Activated T-helper 1 cell treated with anti-CD3 and anti-CD28 coated beads, Interleukin-12 subunit alpha, Interleukin-12 subunit beta, Interleukin-2, Interleukin-4 antibody, amounts not matched to agents 30 ng/mL and 10 ng/mL and 1 ng/mL, durations not matched to agents 14 hours and 24 hours and 36 hours (primary cell): ENCODE measurements at regions of chr3 and their contacts with region 1.

Region 1: GRCh38 chr3:11643605-11644087 is at the start of gene VGLL4:
- DNase-seq: peak; percentile 59
- H3K4me3 Mint-ChIP-seq: peak within 1 kb of the TSS; percentile 95
- H3K27ac Mint-ChIP-seq: peak within 1 kb of the TSS; percentile 96
- H3K4me1 Mint-ChIP-seq: peaks cover 38% of the 10 kb centered on the region
- H3K27me3 Mint-ChIP-seq: peaks cover 17% of the 10 kb centered on the region
- total RNA-seq, gene VGLL4: 46.0 and 48.7 TPM in 2 replicates

Region 2: GRCh38 chr3:11271986-11272904 is 371.4 kb before region 1 on chr3 and contains the start of gene ATG7:
- intact Hi-C with region 1: loop called (anchors 2 kb)
- DNase-seq: peak; percentile 96
- H3K4me3 Mint-ChIP-seq: peak within 1 kb of the TSS; percentile 90
- H3K27ac Mint-ChIP-seq: peak within 1 kb of the TSS; percentile 90
- H3K4me1 Mint-ChIP-seq: peaks cover 45% of the 10 kb centered on the region
- H3K27me3 Mint-ChIP-seq: peaks cover 3% of the 10 kb centered on the region
- total RNA-seq, gene ATG7: 38.6 and 44.0 TPM in 2 replicates

Region 3: GRCh38 chr3:11548721-11549131 is 94.9 kb before region 1 on chr3:
- intact Hi-C with region 1: loop called (anchors 2 kb)
- DNase-seq: no peak
- H3K4me3 Mint-ChIP-seq: no peak overlapping the region
- H3K27ac Mint-ChIP-seq: no peak overlapping the region
- H3K4me1 Mint-ChIP-seq: no peaks in the 10 kb centered on the region
- H3K27me3 Mint-ChIP-seq: no peaks in the 10 kb centered on the region

Region 4: DNA sequence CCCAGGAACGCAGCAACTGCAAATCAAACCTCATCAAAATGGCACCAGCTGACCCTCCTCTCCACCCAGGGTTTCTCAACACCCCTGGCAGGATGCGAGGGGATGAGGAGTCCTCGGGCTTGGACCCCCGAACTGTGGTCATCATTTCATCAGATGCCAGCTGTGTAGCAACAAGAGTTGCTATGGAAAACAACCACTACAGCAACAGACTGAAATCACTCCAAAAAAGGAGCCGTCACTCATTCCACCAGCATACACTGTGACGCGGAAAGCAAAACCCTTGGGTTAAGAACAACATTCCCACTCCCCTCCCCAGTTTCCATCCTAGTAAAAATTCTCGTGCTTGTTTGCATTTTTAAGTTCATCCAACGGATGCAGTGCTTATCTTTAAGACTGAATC is 40.0 kb before region 1 on chr3:
- intact Hi-C with region 1: loop called (anchors 2 kb)
- DNase-seq: no peak
- H3K4me3 Mint-ChIP-seq: no peak overlapping the region
- H3K27ac Mint-ChIP-seq: no peak overlapping the region
- H3K4me1 Mint-ChIP-seq: peaks cover 41% of the 10 kb centered on the region
- H3K27me3 Mint-ChIP-seq: no peaks in the 10 kb centered on the region

Region 5: DNA sequence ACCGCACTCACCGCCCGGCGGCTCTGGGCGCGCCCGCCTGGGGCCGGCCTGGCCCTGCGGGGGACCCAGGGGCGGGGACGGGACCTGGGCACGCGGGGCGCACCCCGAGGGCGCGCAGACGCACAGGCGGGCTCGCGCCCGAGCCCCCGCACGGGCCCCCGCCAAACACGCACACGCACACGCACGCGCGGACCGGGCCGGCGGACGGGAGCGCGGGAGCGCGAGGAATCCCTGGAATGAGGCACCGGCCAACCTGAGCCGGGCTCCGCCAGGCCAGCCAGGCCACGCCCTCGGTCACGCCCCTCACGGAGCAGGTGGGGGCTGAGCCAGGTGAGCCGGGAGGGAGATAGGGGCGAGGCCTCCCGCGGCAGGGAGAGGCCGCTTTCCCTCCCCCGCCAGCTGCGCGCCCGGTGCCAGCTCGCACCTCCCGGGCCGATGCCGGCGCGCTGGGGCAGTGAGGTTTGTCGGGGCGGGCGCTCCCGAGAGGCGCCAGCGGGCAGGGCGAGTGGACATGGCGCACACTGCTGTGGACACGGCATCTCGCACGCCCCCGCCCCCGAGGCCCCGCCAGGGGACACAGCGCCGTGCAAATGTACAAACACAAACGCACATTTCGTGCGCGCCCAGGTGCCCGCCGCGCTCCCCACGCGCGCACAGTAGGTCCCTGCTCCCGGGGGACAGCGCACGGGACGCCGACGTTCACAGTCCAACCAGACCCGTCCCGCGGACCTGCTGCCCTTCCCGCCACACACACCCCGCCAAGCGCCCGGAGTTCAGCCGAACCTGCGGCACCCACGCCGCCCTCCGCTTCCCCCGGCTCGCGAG is 76.0 kb after region 1 on chr3:
- intact Hi-C with region 1: loop called (anchors 5 kb)
- DNase-seq: peak; percentile 34
- H3K4me3 Mint-ChIP-seq: peak overlapping the region; percentile 49
- H3K27ac Mint-ChIP-seq: no peak overlapping the region
- H3K4me1 Mint-ChIP-seq: peaks cover 22% of the 10 kb centered on the region
- H3K27me3 Mint-ChIP-seq: peaks cover 24% of the 10 kb centered on the region

Region 6: DNA sequence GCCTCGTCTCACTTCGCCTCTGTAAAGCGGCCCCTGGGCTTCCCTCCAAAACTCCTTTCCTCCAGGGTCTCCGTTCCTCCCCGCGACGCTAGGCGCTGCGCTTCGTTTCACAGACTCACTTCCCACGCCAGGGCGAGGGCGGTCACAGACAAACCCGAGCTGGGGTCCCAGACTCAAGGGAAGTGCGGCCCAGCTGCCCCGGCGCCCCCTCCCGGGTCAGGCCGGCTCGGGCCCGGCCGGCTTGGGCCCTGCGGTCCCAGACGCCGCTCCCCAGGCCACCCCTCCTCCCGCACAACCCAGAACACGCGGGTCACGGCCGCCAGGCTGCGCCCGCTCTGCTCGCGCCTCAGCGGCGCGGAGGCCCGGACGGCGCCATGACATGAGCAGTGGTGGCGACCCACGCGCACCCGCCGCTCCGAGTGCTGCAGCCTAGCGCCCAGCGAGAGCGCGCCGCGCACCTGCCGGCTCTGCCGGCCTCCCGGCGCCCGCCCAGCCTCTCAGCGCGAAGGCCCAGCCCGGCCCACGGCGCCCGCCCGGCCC is 1775.9 kb after region 1 on chr3:
- intact Hi-C with region 1: loop called (anchors 10 kb)
- DNase-seq: peak; percentile 56
- H3K4me3 Mint-ChIP-seq: peak overlapping the region; percentile 88
- H3K27ac Mint-ChIP-seq: peak overlapping the region; percentile 92
- H3K4me1 Mint-ChIP-seq: peaks cover 71% of the 10 kb centered on the region
- H3K27me3 Mint-ChIP-seq: no peaks in the 10 kb centered on the region